Calu3 (cell line): ENCODE measurements at regions of chr2 and their contacts with region 1.

Region 1: GRCh38 chr2:227766373-227766883 is 20.7 kb downstream of the SCYGR8 start:
- DNase-seq: peak; percentile 90
- H3K4me3 Mint-ChIP-seq: no peak overlapping the region
- H3K27ac Mint-ChIP-seq: peak overlapping the region; percentile 7
- H3K4me1 Mint-ChIP-seq: peaks cover 38% of the 10 kb centered on the region
- H3K27me3 Mint-ChIP-seq: no peaks in the 10 kb centered on the region
- CTCF ChIP-seq: peak; percentile 91

Region 2: DNA sequence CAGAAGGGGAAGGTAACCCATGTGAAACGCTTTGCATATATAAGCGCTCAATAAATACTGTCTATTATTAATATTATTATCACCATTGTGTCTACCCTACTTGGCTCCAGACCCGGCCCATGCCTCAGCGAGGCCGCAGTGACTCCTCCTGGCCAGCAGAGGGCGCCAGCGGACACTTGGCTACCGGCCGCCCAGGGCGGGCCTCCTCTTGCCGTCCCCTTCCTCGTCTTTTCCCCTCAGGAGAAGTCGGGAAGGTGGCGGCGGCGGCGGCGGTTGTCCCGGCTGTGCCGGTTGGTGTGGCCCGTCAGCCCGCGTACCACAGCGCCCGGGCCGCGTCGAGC is 294.5 kb before region 1 on chr2 and contains the start of gene AGFG1:
- CTCF ChIA-PET with region 1: no interaction called
- intact Hi-C with region 1: loop called (anchors 5 kb)
- DNase-seq: peak; percentile 92
- H3K4me3 Mint-ChIP-seq: peak within 1 kb of the TSS; percentile 81
- H3K27ac Mint-ChIP-seq: peak within 1 kb of the TSS; percentile 57
- H3K4me1 Mint-ChIP-seq: peaks cover 40% of the 10 kb centered on the region
- H3K27me3 Mint-ChIP-seq: no peaks in the 10 kb centered on the region
- CTCF ChIP-seq: peak; percentile 99
- total RNA-seq, gene AGFG1: 115 and 126 TPM in 2 replicates

Region 3: DNA sequence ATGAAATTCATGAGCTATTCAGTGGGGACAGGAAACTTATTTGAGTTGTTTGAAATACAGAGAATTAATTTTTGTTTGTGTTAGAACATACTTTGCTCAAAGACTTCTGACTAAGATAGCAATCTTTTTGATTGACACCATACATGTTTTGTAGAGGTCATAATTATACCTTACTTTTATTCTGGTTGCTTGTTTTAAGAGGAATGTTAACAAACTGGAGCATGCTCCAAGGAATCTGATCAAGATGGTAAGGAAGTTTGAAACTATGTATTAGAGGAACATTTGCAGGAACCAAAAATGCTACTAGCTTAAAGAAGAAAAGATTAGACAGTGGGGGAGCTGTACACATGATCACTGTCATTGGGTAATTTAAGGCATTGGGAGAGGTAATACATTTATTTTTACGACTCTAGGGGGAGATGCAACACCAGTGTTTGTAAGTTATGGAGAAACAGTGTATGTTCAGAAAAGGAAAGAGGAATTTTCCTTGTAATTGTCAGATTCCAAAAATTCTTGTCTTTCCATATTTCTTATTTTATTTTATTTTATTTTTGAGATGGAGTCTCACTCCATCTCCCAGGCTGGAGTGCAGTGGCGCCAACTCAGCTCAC is 286.5 kb before region 1 on chr2:
- CTCF ChIA-PET with region 1: interaction called, 4 read pairs
- intact Hi-C with region 1: loop called (anchors 1 kb)
- DNase-seq: no peak
- H3K4me3 Mint-ChIP-seq: no peak overlapping the region
- H3K27ac Mint-ChIP-seq: no peak overlapping the region
- H3K4me1 Mint-ChIP-seq: peaks cover 54% of the 10 kb centered on the region
- H3K27me3 Mint-ChIP-seq: no peaks in the 10 kb centered on the region
- CTCF ChIP-seq: peak; percentile 17

Region 4: GRCh38 chr2:227551836-227552235 is 214.6 kb before region 1 on chr2:
- CTCF ChIA-PET with region 1: no interaction called
- intact Hi-C with region 1: loop called (anchors 10 kb)
- DNase-seq: no peak
- H3K4me3 Mint-ChIP-seq: no peak overlapping the region
- H3K27ac Mint-ChIP-seq: no peak overlapping the region
- H3K4me1 Mint-ChIP-seq: peaks cover 8% of the 10 kb centered on the region
- H3K27me3 Mint-ChIP-seq: no peaks in the 10 kb centered on the region
- CTCF ChIP-seq: no peak

Region 5: DNA sequence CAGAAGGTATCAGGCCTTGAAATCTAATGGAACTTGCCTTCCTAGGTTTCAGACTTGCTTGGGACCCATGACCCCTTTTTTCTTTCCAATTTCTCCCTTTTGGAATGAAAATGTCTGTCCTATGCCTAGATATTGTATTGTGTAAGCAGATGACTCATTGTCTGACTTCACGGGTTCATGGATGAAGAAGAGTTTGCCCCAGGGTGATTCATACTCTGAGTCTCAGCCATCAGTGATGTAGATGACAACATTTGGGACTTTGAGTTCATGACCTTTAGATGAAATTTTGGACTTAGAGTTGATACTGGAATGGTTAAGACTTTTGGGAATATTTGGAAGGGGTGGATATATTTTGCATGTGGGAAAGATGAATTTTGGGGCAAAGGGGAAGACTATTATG is 111.0 kb before region 1 on chr2:
- CTCF ChIA-PET with region 1: interaction called, 64 read pairs
- intact Hi-C with region 1: loop called (anchors 1 kb)
- DNase-seq: peak; percentile 9
- H3K4me3 Mint-ChIP-seq: no peak overlapping the region
- H3K27ac Mint-ChIP-seq: peak overlapping the region; percentile 14
- H3K4me1 Mint-ChIP-seq: peaks cover 25% of the 10 kb centered on the region
- H3K27me3 Mint-ChIP-seq: no peaks in the 10 kb centered on the region
- CTCF ChIP-seq: no peak

Region 6: DNA sequence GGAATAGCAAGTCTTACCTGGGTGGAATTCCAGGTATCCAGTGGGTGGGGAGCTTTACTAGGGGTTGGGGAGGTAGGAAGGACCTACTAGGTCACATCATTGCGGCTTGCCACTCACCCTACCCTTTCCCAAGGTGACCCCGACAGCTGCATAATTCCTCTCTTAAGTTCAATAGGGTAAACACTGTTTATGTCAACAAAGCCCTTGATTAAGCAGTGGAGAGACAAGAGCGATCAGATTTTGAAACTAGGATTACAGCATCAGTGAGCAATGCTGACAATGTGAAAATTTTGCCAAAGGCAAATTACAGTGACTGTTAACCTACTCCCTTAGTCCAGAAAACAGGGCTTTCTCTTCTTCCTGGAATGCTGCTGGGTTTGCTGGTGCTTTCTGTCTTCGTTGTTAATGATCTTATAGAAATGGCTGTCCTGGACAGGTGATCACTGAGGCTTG is 63.1 kb before region 1 on chr2:
- CTCF ChIA-PET with region 1: interaction called, 6 read pairs
- intact Hi-C with region 1: loop called (anchors 5 kb)
- DNase-seq: peak; percentile 33
- H3K4me3 Mint-ChIP-seq: no peak overlapping the region
- H3K27ac Mint-ChIP-seq: peak overlapping the region; percentile 70
- H3K4me1 Mint-ChIP-seq: peaks cover 42% of the 10 kb centered on the region
- H3K27me3 Mint-ChIP-seq: no peaks in the 10 kb centered on the region
- CTCF ChIP-seq: no peak

Region 7: GRCh38 chr2:227717687-227718567 is 48.5 kb before region 1 on chr2 and contains the start of gene SLC19A3:
- CTCF ChIA-PET with region 1: interaction called, 5 read pairs
- intact Hi-C with region 1: loop called (anchors 1 kb)
- DNase-seq: peak; percentile 95
- H3K4me3 Mint-ChIP-seq: peak within 1 kb of the TSS; percentile 75
- H3K27ac Mint-ChIP-seq: peak within 1 kb of the TSS; percentile 63
- H3K4me1 Mint-ChIP-seq: peaks cover 52% of the 10 kb centered on the region
- H3K27me3 Mint-ChIP-seq: no peaks in the 10 kb centered on the region
- CTCF ChIP-seq: no peak
- total RNA-seq, gene SLC19A3: 63.8 and 82.4 TPM in 2 replicates